ENCODE measurements at regions of chr7 and their contacts with region 1.

Region 1: DNA sequence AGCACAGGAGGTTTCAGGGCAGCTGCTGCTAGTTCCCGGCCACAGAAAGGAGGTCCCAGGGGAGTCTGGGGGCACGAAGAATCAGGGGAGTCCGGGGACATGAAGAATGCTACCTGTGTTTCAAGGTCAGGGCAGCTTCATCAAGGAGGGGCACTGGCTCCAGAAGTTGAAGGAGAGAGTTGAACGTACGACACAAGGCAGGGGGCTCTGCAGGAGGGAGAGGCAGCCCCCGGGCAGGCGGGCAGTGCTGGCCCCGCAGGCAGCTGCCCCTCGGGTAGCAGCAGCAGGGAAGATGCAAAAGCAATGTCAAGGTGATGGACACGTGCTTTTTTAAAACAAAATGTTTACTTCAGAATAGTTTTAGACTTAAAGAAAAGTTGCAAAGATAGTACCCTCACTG is 134.7 kb upstream of the RNF32 start:
- DNase-seq: no peak
- H3K4me3 ChIP-seq: no peak overlapping the region
- H3K4me3 Mint-ChIP-seq: no peak overlapping the region
- H3K27ac Mint-ChIP-seq: no peak overlapping the region
- H3K4me1 ChIP-seq: no peaks in the 10 kb centered on the region
- H3K4me1 Mint-ChIP-seq: no peaks in the 10 kb centered on the region
- H3K27me3 ChIP-seq: no peaks in the 10 kb centered on the region
- H3K27me3 Mint-ChIP-seq: no peaks in the 10 kb centered on the region
- CTCF ChIP-seq: no peak

Region 2: DNA sequence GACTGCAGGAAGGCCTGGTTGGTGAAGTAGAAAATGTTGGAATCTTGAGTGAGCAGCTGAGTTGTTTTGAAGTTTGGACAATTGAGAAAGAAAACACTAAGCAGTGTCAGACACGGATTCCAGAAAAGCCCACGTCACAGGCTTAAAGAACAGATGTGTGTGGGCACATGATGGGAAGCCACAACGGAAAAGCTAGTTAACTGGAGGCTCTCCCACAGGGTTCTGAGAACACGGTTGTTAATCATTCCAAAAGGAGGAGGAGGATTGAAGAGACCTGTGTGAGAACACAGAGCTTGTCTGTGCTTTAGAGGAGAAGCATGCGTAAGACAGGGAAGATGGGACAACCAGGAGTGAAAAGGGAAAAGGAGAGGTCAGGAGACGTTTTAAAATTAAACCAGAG is 736.2 kb before region 1 on chr7:
- CTCF ChIA-PET with region 1: no interaction called
- POLR2A ChIA-PET with region 1: interaction called, 11 read pairs
- intact Hi-C with region 1: no loop called
- DNase-seq: no peak
- H3K4me3 ChIP-seq: no peak overlapping the region
- H3K4me3 Mint-ChIP-seq: no peak overlapping the region
- H3K27ac Mint-ChIP-seq: no peak overlapping the region
- H3K4me1 ChIP-seq: no peaks in the 10 kb centered on the region
- H3K4me1 Mint-ChIP-seq: no peaks in the 10 kb centered on the region
- H3K27me3 ChIP-seq: no peaks in the 10 kb centered on the region
- H3K27me3 Mint-ChIP-seq: no peaks in the 10 kb centered on the region
- CTCF ChIP-seq: no peak